Right ventricle myocardium inferior (tissue), 1 donor: ENCODE measurements at regions of chr11 and their contacts with region 1.

Region 1: GRCh38 chr11:79809487-79809886 is 368.7 kb upstream of the TENM4 start:
- DNase-seq: no peak
- ATAC-seq: no peak

Region 2: GRCh38 chr11:79747406-79747805 is 62.1 kb before region 1 on chr11:
- intact Hi-C with region 1: no loop called
- DNase-seq: no peak
- ATAC-seq: no peak

Region 3: DNA sequence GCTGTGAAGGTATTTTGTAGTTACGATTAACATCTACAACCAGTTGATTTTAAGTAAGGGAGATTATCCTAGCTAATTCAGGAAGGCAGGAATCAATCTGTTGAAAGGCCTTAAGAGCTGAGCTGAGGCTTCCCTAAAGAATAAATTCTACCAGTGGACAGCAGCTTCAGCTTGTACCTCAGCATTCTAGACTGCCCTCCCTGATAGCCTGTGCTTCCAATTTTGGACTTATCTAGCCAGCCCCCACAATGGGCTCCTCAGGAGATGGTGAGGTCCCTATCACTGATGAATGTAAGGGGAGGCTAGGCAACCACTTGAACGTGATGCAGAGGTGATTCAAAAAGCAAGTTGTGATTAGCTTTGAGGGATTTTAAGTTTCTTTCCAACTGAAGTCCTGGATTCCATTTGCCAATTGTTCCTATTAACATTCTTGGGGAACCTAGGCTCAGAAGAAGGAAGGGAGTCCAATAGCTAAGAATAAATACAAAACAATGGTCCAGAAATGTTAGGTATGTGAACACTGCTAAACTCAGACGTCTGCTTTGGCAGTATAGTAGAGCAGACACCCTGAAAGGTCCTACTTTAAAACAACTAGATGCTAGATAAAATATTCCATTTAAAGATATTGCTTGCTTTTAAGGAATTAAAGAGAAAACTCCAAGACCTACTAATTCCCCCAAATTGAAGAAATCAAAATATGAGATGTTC is 35.7 kb after region 1 on chr11:
- intact Hi-C with region 1: loop called (anchors 2 kb)
- DNase-seq: no peak
- ATAC-seq: peak; percentile 63